Heart right ventricle (tissue), 16 donors: ENCODE measurements at regions of chr7 and their contacts with region 1.

Region 1: DNA sequence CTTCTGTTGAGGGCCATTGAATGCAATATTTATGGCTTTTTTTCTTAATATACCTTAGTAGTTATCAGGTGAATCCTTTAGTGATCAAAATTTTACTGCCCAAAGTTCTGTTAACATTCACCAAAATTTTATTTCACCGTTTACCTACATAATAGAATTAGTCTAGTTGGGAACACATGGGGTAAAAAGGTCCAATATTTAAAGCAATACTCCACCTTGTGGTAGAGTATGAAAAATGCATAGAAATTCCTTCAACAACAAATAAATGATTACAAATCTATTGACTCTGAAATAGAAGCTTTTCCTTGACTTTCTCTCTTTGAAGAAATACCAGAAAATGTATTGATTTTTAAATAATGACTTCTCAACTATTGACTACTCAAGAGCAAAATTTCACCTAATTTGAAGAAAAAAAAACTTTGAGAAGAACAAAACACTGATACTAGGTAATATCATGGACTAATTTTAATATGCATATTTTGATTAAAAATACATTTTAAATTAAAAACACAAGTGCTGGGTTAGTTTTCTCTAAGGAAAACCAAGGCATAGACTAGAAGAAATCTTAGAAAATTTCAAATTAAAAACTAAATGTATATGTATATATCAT is 43.3 kb downstream of the POLR1F start:
- DNase-seq: no peak
- ATAC-seq: no peak
- H3K4me3 ChIP-seq: no peak overlapping the region
- H3K27ac ChIP-seq: no peak overlapping the region
- H3K4me1 ChIP-seq: no peaks in the 10 kb centered on the region
- H3K27me3 ChIP-seq: peaks cover 0 to 4% (median 0%) of the 10 kb centered on the region in 7 donors
- CTCF ChIP-seq: peak in 8 of 9 donors; percentile 42 to 70 (median 65)

Region 2: DNA sequence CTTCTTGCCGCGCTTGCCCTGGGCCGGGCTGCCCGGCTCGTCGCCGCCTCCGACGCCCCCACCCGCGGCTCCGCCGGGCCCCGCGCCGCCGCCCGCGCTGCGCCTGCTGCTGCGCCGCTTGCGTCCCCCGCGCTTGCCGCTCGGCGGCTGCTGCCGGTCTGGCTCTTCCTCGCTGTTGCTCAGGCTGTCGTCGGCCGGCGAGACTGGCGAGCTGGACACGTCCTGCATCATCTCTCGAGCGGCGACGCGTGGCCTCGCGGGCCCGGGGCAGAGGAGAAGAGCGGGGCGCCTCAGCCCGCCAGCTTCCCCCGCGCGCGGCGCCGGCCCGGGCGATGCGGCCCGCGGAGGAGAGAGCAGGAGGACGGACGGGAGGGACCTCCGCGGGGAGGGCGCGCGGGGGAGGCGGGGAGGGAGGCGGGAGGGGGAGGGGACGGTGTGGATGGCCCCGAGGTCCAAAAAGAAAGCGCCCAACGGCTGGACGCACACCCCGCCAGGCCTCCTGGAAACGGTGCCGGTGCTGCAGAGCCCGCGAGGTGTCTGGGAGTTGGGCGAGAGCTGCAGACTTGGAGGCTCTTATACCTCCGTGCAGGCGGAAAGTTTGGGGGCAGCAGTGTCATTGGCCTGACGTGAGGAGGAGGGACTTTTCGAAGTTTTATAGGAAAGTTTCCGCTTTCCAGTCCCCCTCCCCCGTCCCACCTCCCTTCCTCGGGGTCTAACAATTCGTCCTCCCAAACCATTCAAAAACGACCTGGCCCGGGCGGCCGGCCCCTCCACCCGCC is 548.2 kb before region 1 on chr7 and contains the start of gene TWIST1:
- intact Hi-C with region 1: loop called in 4 of 10 experiments (anchors 5 to 10 kb)
- DNase-seq: peak; percentile 46 to 64
- ATAC-seq: peak; percentile 72 to 88 (median 82)
- H3K4me3 ChIP-seq: peak within 1 kb of the TSS; percentile 47 to 72 (median 62)
- H3K27ac ChIP-seq: peak within 1 kb of the TSS in 9 of 10 donors; percentile 36 to 70 (median 52)
- H3K4me1 ChIP-seq: peaks cover 0 to 32% (median 18%) of the 10 kb centered on the region in 9 donors
- H3K27me3 ChIP-seq: peaks cover 9 to 99% (median 94%) of the 10 kb centered on the region in 7 donors
- CTCF ChIP-seq: no peak
- total RNA-seq, gene TWIST1: 0.45 to 3.5 (median 1.3) TPM

Region 3: DNA sequence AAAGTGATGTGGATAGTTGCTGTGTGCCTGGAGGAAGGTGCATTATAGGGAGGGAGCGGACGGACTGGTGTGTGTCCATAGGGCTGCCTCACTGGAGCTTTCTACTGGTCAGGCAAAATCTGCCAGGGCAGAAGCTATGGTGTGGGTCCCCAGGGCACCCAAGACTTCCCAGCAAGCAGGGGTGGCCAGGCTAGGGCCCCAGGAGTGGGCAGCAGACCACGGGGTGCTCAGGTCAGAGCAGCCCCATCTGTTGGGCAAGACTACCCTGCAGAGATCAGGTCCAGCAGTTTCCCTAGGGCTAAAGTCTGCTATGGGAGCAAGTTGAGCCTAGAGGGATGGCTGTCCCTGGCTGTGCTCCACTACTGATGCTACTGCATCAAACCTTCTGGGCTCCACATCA is 69.7 kb before region 1 on chr7:
- intact Hi-C with region 1: no loop called
- DNase-seq: no peak
- ATAC-seq: no peak
- H3K4me3 ChIP-seq: no peak overlapping the region
- H3K27ac ChIP-seq: no peak overlapping the region
- H3K4me1 ChIP-seq: no peaks in the 10 kb centered on the region
- H3K27me3 ChIP-seq: no peaks in the 10 kb centered on the region
- CTCF ChIP-seq: no peak